Left ventricle myocardium superior (tissue), 1 donor: ENCODE measurements at regions of chr7 and their contacts with region 1.

Region 1: GRCh38 chr7:1065263-1066260 is 21.2 kb downstream of the GPR146 start:
- DNase-seq: peak; percentile 93
- ATAC-seq: peak; percentile 95

Region 2: GRCh38 chr7:994592-995308 is 70.8 kb before region 1 on chr7:
- intact Hi-C with region 1: loop called (anchors 2 kb)
- DNase-seq: no peak
- ATAC-seq: no peak